T-cell (primary cell): ENCODE measurements at regions of chr19 and their contacts with region 1.

Region 1: GRCh38 chr19:35352448-35353304 is 5.0 kb downstream of the FFAR1 start:
- DNase-seq: peak; percentile 34 to 87 (median 56)
- ATAC-seq: peak; percentile 79 to 86 (median 81)
- H3K4me3 ChIP-seq: no peak overlapping the region
- H3K4me3 Mint-ChIP-seq: no peak overlapping the region
- H3K27ac ChIP-seq: no peak overlapping the region
- H3K27ac Mint-ChIP-seq: no peak overlapping the region
- H3K4me1 ChIP-seq: peaks cover 1 to 15% of the 10 kb centered on the region in 2 experiments
- H3K4me1 Mint-ChIP-seq: peaks cover 11 to 20% (median 13%) of the 10 kb centered on the region in 3 donors
- H3K27me3 ChIP-seq: peaks cover 0 to 15% of the 10 kb centered on the region in 2 experiments
- H3K27me3 Mint-ChIP-seq: peaks cover 0 to 9% of the 10 kb centered on the region in 2 donors

Region 2: GRCh38 chr19:35468637-35469036 is 116.0 kb after region 1 on chr19:
- CTCF ChIA-PET with region 1: interaction called, 3 to 21 read pairs
- POLR2A ChIA-PET with region 1: no interaction called
- DNase-seq: peak; percentile 33 to 81 (median 60)
- ATAC-seq: peak; percentile 94 to 99 (median 96)
- H3K4me3 ChIP-seq: no peak overlapping the region
- H3K4me3 Mint-ChIP-seq: no peak overlapping the region
- H3K27ac ChIP-seq: no peak overlapping the region
- H3K27ac Mint-ChIP-seq: no peak overlapping the region
- H3K4me1 ChIP-seq: peaks cover 0 to 10% of the 10 kb centered on the region in 2 experiments
- H3K4me1 Mint-ChIP-seq: peaks cover 4 to 21% (median 8%) of the 10 kb centered on the region in 3 donors
- H3K27me3 ChIP-seq: no peaks in the 10 kb centered on the region
- H3K27me3 Mint-ChIP-seq: no peaks in the 10 kb centered on the region

Region 3: DNA sequence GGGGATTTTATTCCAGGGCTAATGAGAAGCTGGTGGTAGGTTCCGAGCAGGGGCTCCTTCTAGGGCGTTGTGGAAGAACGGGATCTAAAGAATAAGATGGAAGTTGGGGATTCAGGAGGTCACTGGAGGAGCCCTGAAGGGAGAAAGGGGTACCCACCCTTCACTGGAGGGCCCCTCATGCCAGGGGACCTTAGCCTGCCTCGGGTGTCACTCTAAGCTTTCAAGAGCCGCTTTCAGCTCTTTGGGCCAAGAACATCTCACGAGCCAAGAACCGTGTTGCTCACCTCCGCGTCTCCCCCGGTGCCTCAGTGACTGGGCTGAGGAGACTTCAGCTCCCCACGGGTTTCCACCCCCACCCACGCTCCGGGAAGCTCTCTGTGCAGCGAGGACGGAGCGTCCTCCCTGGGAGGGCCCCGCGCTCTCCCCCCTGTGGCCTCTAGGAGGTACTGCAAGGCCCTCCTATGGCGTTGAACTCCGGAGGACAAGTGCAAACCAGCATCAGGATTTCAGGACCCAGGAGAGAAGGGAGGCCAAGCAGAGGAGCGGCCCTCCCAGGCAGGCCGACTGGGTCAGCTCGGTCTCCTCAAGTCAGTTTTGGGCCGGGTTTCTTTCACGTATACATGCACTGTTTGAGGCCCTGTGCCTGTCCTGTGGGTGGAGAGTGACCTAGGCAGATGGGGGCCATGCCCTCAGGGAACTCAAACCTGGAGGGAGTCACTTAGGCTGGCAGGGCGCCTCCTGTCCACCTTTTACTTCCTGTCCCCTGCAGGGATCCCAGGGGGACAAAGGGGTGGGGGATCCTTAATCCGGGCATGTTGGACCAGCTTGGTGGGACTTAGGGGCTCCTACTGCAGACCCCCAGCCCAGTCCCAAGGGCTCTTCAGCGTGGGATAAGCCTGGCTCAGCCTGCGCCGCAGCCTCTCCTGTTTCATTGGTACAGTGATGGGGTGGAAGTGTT is 142.7 kb after region 1 on chr19:
- CTCF ChIA-PET with region 1: interaction called, 10 to 13 read pairs
- POLR2A ChIA-PET with region 1: no interaction called
- DNase-seq: peak; percentile 24 to 76 (median 54)
- ATAC-seq: peak; percentile 91 to 95 (median 94)
- H3K4me3 ChIP-seq: peak overlapping the region in 1 of 2 donors; percentile 35
- H3K4me3 Mint-ChIP-seq: no peak overlapping the region
- H3K27ac ChIP-seq: no peak overlapping the region
- H3K27ac Mint-ChIP-seq: no peak overlapping the region
- H3K4me1 ChIP-seq: peaks cover 0 to 8% of the 10 kb centered on the region in 2 experiments
- H3K4me1 Mint-ChIP-seq: peaks cover 0 to 7% (median 2%) of the 10 kb centered on the region in 3 donors
- H3K27me3 ChIP-seq: peaks cover 0 to 30% of the 10 kb centered on the region in 2 experiments
- H3K27me3 Mint-ChIP-seq: peaks cover 3 to 18% of the 10 kb centered on the region in 2 donors